RWPE1 (cell line): ENCODE measurements at regions of chr10 and their contacts with region 1.

Region 1: GRCh38 chr10:73859428-73859783 is 14.9 kb downstream of the CAMK2G start:
- DNase-seq: no peak
- H3K27ac ChIP-seq: peak overlapping the region; percentile 8
- CTCF ChIP-seq: no peak

Region 2: GRCh38 chr10:73848821-73849489 is 10.5 kb before region 1 on chr10:
- CTCF ChIA-PET with region 1: interaction called, 9 read pairs
- POLR2A ChIA-PET with region 1: interaction called, 10 read pairs
- DNase-seq: peak; percentile 90
- H3K27ac ChIP-seq: peak overlapping the region; percentile 11
- CTCF ChIP-seq: peak; percentile 98